Gastrocnemius medialis (tissue), 4 donors: ENCODE measurements at regions of chr15 and their contacts with region 1.

Region 1: DNA sequence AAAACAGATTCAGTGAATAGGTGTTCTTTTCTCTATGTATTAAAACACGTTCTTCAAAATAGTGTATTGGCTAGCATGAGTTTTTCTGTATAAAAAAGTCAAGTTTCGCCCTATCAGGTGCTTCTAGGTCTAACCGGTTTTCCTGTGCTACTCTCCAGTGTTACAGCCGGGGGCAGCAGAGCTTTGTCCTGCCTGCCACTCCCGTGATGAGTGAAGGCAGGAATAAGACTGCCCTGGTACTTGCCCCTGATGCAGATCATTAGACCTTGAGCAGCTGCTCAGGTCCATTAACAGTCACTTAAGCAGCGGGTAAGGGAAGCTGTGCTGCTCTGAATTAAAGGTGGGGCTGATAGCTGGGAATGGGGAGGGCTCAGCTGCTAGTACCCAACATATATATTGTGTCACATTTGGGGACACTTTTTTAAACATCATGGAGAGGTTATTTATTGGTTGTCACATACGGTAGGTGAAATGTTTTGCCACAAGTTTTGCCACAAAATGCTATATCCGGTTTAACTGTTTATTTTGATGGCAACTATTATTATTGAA is 1.3 kb upstream of the UNC13C start:
- DNase-seq: peak; percentile 10 to 59
- ATAC-seq: peak; percentile 73 to 81
- H3K4me3 ChIP-seq: peak overlapping the region in 1 of 4 donors; percentile 53
- H3K27ac ChIP-seq: peak overlapping the region in 3 of 4 donors; percentile 19 to 75 (median 74)
- H3K4me1 ChIP-seq: no peaks in the 10 kb centered on the region
- H3K27me3 ChIP-seq: no peaks in the 10 kb centered on the region
- CTCF ChIP-seq: peak in 4 of 5 experiments; percentile 23 to 42 (median 32)
- POLR2A ChIP-seq: no peak

Region 2: GRCh38 chr15:54089791-54090190 is 112.9 kb after region 1 on chr15:
- in situ Hi-C with region 1: no loop called
- intact Hi-C with region 1: loop called (anchors 5 kb)
- DNase-seq: no peak
- ATAC-seq: peak in 1 of 2 donors; percentile 71
- H3K4me3 ChIP-seq: no peak overlapping the region
- H3K27ac ChIP-seq: peak overlapping the region in 1 of 4 donors; percentile 39
- H3K4me1 ChIP-seq: peaks cover 0 to 3% of the 10 kb centered on the region in 2 donors
- H3K27me3 ChIP-seq: no peaks in the 10 kb centered on the region
- CTCF ChIP-seq: no peak
- POLR2A ChIP-seq: no peak

Region 3: DNA sequence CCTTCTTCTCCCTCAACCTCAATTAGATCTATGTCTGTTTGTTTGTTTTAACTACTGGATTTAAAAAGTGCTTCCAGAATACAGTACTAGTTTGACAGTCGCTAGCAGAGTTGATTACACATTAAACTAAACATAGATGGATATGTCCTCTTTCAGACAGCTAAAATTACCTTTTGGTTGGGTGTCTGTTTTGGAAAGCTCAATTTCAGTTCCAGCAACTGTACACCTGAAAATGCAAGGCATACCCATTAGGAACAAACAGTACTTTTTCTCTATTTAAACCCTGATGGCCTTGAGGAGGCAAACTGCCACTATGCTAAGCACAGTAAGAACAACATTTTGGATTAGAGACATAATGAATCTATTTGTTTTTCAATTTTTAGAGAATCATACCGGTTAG is 235.7 kb after region 1 on chr15:
- in situ Hi-C with region 1: no loop called
- intact Hi-C with region 1: loop called (anchors 2 kb)
- DNase-seq: no peak
- ATAC-seq: peak; percentile 90 to 96
- H3K4me3 ChIP-seq: peak overlapping the region; percentile 26 to 39 (median 32)
- H3K27ac ChIP-seq: peak overlapping the region; percentile 65 to 83 (median 74)
- H3K4me1 ChIP-seq: peaks cover 4 to 8% of the 10 kb centered on the region in 2 donors
- H3K27me3 ChIP-seq: no peaks in the 10 kb centered on the region
- CTCF ChIP-seq: no peak
- POLR2A ChIP-seq: peak in 1 of 2 donors; percentile 30

Region 4: DNA sequence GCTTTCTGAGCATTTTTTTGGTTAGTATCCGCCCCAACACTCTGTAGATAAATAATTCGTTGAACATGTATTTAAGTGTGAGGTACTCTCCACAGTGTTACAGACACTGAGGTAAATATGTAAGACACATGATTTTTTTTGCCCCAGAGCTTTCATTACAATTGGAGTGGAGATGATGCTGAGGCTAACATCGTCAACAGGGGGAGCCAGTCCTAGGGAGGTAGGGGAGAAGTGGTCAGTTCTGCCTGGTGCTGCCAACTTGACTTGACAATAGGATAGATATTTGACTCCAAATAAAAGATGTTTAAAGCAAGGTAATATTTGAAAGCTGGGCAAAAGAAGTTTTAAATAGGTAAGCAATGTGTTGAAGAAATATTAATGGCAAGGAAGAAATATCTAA is 297.0 kb after region 1 on chr15:
- in situ Hi-C with region 1: no loop called
- intact Hi-C with region 1: loop called (anchors 10 kb)
- DNase-seq: no peak
- ATAC-seq: no peak
- H3K4me3 ChIP-seq: no peak overlapping the region
- H3K27ac ChIP-seq: no peak overlapping the region
- H3K4me1 ChIP-seq: peaks cover 0 to 13% of the 10 kb centered on the region in 2 donors
- H3K27me3 ChIP-seq: no peaks in the 10 kb centered on the region
- CTCF ChIP-seq: no peak
- POLR2A ChIP-seq: no peak